MCF 10A (cell line): ENCODE measurements at regions of chr10 and their contacts with region 1.

Region 1: GRCh38 chr10:117653170-117653515 is 110.6 kb downstream of the EMX2 start:
- DNase-seq: peak; percentile 96
- H3K4me3 Mint-ChIP-seq: no peak overlapping the region
- H3K27ac Mint-ChIP-seq: peak overlapping the region; percentile 96
- H3K4me1 Mint-ChIP-seq: peaks cover 12% of the 10 kb centered on the region
- H3K27me3 Mint-ChIP-seq: no peaks in the 10 kb centered on the region
- CTCF ChIP-seq: no peak

Region 2: DNA sequence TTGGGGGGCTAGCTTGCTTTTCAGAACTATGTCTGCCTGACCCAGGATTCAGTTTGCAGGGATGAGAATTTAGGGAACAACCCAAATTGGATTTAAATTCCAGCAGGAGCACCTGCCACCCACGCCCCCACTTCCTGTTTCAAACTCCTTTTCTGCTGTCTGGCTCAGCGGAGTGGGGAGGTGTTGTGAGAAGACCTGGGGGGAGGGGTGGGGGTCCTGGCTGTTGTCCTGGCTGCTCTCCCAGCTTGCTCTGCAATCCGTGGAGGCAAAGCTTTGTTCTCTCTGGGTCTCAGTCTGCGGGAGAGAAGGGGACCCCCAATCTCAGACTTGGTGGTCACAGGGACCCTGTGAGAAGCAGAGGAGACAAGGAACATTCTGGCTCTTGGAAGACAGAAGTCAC is 455.1 kb before region 1 on chr10:
- CTCF ChIA-PET with region 1: no interaction called
- POLR2A ChIA-PET with region 1: no interaction called
- intact Hi-C with region 1: no loop called
- DNase-seq: no peak
- H3K4me3 Mint-ChIP-seq: no peak overlapping the region
- H3K27ac Mint-ChIP-seq: no peak overlapping the region
- H3K4me1 Mint-ChIP-seq: no peaks in the 10 kb centered on the region
- H3K27me3 Mint-ChIP-seq: peaks cover 13% of the 10 kb centered on the region
- CTCF ChIP-seq: no peak

Region 3: DNA sequence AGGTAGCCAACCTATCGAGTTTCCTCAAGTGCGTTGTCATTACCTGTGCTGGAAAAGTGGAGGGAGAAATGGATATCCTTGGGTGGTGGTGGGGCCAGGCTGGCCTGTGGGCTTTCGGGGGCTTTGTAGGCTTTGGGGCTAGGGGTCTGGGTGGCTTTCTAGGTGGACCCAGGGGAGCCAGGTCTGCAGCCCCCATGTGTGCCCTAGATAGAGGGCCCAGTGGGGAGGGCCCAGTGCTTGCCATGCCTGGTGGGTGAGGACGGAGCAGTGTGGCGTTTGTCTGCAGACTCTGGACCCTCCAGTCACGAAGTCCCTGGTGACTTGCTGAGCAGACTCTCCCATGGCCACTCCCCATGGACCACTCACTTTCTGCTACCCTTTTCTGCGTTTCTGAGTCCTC is 90.9 kb before region 1 on chr10:
- CTCF ChIA-PET with region 1: no interaction called
- POLR2A ChIA-PET with region 1: no interaction called
- intact Hi-C with region 1: no loop called
- DNase-seq: no peak
- H3K4me3 Mint-ChIP-seq: no peak overlapping the region
- H3K27ac Mint-ChIP-seq: no peak overlapping the region
- H3K4me1 Mint-ChIP-seq: no peaks in the 10 kb centered on the region
- H3K27me3 Mint-ChIP-seq: no peaks in the 10 kb centered on the region
- CTCF ChIP-seq: no peak

Region 4: GRCh38 chr10:117663750-117664149 is 10.6 kb after region 1 on chr10:
- CTCF ChIA-PET with region 1: interaction called, 3 read pairs
- POLR2A ChIA-PET with region 1: interaction called, 11 read pairs
- intact Hi-C with region 1: no loop called
- DNase-seq: peak; percentile 86
- H3K4me3 Mint-ChIP-seq: no peak overlapping the region
- H3K27ac Mint-ChIP-seq: peak overlapping the region; percentile 95
- H3K4me1 Mint-ChIP-seq: peaks cover 14% of the 10 kb centered on the region
- H3K27me3 Mint-ChIP-seq: no peaks in the 10 kb centered on the region
- CTCF ChIP-seq: no peak

Region 5: GRCh38 chr10:117762819-117763172 is 109.7 kb after region 1 on chr10:
- CTCF ChIA-PET with region 1: no interaction called
- POLR2A ChIA-PET with region 1: interaction called, 3 read pairs
- intact Hi-C with region 1: loop called (anchors 5 kb)
- DNase-seq: peak; percentile 89
- H3K4me3 Mint-ChIP-seq: no peak overlapping the region
- H3K27ac Mint-ChIP-seq: peak overlapping the region; percentile 85
- H3K4me1 Mint-ChIP-seq: peaks cover 22% of the 10 kb centered on the region
- H3K27me3 Mint-ChIP-seq: no peaks in the 10 kb centered on the region
- CTCF ChIP-seq: no peak